ENCODE measurements at regions of chr22 and their contacts with region 1.

Region 1: GRCh38 chr22:42169055-42169469 is 38.5 kb upstream of the CYP2D6 start:
- DNase-seq: peak; percentile 85
- ATAC-seq: peak; percentile 90
- H3K4me3 Mint-ChIP-seq: no peak overlapping the region
- H3K27ac Mint-ChIP-seq: peak overlapping the region; percentile 50
- H3K4me1 Mint-ChIP-seq: peaks cover 15% of the 10 kb centered on the region
- H3K27me3 Mint-ChIP-seq: no peaks in the 10 kb centered on the region

Region 2: DNA sequence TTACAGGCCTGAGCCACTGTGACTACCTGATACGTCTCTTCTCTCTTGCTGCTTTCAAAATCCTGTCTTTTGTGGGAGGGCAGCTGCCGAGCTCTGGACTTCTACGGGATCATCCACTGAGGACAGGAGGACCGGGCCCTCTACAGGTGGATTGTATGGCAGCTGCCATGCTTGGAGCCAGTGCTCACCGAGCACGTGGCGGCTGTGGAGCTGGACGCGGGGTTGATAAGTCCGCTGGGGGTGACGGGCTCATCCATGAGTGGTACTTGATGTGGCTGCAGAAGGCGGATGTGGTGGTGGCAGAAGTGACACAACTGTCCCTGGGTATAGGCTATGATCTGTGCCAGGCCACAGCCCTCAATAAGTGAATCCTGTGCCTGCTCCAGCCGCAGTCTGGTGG is 36.6 kb before region 1 on chr22:
- CTCF ChIA-PET with region 1: no interaction called
- POLR2A ChIA-PET with region 1: no interaction called
- DNase-seq: no peak
- ATAC-seq: no peak
- H3K4me3 Mint-ChIP-seq: no peak overlapping the region
- H3K27ac Mint-ChIP-seq: no peak overlapping the region
- H3K4me1 Mint-ChIP-seq: no peaks in the 10 kb centered on the region
- H3K27me3 Mint-ChIP-seq: no peaks in the 10 kb centered on the region

Region 3: DNA sequence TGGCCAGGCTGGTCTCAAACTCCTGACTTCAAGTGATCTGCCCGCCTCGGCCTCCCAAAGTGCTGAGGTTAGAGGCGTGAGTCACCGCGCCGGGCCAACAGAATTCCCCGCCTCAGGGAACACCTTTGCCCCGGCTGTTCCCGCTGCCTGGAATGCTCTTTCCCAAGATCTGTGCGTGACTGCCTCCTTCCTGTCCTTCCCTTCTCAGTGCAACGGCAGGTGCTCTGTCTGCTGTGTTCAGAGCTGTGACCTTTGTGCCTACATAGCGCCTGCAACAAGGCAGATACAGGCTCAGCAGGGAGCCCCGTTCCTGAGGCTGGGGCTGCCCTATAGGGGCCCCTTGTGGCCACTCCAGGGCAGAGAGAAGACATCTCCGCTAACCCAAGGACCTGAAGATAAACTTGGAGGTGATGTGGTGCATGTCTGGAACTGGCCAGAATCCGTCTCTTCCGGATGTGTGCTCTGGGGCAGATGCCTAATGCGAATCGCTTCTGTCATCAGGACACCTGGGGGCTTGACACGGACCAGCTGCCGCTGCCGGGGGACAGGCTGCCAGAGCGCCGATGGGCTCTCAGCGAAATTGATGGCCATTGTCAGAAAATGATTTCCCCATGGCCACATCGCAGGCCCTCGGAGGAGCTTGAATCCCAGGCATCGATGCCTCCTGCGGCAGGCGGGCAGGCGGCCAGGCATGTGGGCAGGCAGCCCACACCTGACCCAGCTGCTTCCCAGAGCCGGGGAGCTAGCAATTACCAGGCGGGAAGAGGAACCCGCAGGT is 144.9 kb after region 1 on chr22:
- CTCF ChIA-PET with region 1: interaction called, 17 read pairs
- POLR2A ChIA-PET with region 1: interaction called, 3 read pairs
- DNase-seq: peak; percentile 49
- ATAC-seq: peak; percentile 69
- H3K4me3 Mint-ChIP-seq: no peak overlapping the region
- H3K27ac Mint-ChIP-seq: peak overlapping the region; percentile 1
- H3K4me1 Mint-ChIP-seq: peaks cover 27% of the 10 kb centered on the region
- H3K27me3 Mint-ChIP-seq: no peaks in the 10 kb centered on the region

Region 4: DNA sequence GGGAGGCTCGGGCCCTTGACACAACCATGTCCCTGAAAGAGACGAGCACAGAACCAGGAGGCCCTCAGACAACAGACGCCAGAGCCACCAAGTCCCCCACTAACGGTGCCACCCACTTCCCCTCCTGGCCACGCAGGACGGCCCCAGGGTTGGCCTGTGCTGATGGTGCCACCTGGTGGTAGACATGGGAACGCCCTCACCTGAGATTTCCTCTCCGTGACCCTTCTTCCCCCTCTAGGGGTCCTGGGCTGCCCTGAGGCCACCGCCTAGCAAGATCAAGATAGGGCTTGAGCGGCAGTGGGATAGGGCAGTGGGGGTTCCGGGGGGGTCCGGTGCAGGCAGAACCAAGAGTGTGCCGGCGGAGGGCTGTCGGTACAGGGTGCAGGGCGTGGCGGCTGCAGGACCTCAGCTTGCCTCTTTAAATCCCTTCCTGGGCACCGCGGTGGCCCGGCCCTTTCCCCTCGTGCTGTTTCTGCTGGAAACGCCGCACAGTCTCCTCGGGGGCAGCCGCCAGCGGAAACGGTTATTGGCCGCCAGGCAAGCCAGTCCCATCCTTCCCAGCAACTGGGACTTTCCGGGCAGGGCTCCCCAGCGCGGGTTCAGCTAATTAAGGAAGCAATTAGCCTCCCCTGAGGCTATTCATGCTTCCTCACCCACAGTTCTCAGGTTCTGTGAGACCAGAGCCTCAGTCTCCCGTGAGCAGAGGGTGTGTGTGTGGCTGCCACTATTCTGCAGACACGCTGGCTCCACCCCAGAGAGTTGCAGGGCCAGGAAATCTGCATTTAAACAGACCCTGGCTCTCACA is 268.6 kb after region 1 on chr22:
- CTCF ChIA-PET with region 1: interaction called, 67 read pairs
- POLR2A ChIA-PET with region 1: interaction called, 3 read pairs
- DNase-seq: peak; percentile 89
- ATAC-seq: peak; percentile 96
- H3K4me3 Mint-ChIP-seq: peak overlapping the region; percentile 76
- H3K27ac Mint-ChIP-seq: peak overlapping the region; percentile 74
- H3K4me1 Mint-ChIP-seq: peaks cover 34% of the 10 kb centered on the region
- H3K27me3 Mint-ChIP-seq: peaks cover 4% of the 10 kb centered on the region